Left ventricle myocardium superior (tissue), 1 donor: ENCODE measurements at regions of chr1 and their contacts with region 1.

Region 1: GRCh38 chr1:212368073-212368484 is 46.6 kb downstream of the PACC1 start:
- DNase-seq: no peak
- ATAC-seq: peak; percentile 77

Region 2: GRCh38 chr1:212062832-212063438 is 305.1 kb before region 1 on chr1:
- intact Hi-C with region 1: loop called (anchors 5 kb)
- DNase-seq: no peak
- ATAC-seq: peak; percentile 32

Region 3: DNA sequence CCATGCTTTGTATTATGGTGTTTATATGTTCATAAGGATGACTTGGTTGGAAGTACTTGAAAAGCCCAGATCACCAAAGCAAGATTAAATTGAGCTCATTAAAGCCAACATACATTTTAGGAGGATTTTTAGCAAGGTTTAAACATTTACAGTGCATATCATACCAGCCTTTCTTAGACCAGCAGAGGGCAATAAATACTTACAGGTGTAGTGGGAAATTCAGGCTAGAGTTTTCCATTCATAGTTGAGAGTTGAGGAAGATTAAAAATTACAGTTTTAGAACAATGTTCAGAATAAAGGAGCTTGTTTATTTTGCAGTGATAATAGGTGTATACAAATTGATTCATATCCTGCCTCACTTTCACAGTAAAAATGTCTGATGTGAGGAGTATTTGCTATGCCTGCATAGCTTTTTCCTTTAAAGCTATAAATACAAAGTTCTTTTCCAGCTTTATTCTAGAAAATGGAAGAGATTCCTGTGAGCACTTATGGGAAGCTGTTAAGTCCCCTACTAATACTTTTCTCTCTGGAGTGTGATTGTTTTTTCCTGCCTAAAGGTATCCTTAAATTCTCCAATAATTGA is 297.3 kb before region 1 on chr1:
- intact Hi-C with region 1: loop called (anchors 5 kb)
- DNase-seq: no peak
- ATAC-seq: peak; percentile 46